Activated CD4-positive, alpha-beta memory T cell treated with anti-CD3 and anti-CD28 coated beads for 36 hours (primary cell): ENCODE measurements at regions of chr11 and their contacts with region 1.

Region 1: GRCh38 chr11:118791111-118791965 is at the start of gene DDX6:
- DNase-seq: peak; percentile 94
- H3K4me3 Mint-ChIP-seq: peak within 1 kb of the TSS; percentile 94
- H3K27ac Mint-ChIP-seq: peak within 1 kb of the TSS; percentile 99
- H3K4me1 Mint-ChIP-seq: peaks cover 22% of the 10 kb centered on the region
- H3K27me3 Mint-ChIP-seq: no peaks in the 10 kb centered on the region
- total RNA-seq, gene DDX6: 175 to 180 TPM

Region 2: DNA sequence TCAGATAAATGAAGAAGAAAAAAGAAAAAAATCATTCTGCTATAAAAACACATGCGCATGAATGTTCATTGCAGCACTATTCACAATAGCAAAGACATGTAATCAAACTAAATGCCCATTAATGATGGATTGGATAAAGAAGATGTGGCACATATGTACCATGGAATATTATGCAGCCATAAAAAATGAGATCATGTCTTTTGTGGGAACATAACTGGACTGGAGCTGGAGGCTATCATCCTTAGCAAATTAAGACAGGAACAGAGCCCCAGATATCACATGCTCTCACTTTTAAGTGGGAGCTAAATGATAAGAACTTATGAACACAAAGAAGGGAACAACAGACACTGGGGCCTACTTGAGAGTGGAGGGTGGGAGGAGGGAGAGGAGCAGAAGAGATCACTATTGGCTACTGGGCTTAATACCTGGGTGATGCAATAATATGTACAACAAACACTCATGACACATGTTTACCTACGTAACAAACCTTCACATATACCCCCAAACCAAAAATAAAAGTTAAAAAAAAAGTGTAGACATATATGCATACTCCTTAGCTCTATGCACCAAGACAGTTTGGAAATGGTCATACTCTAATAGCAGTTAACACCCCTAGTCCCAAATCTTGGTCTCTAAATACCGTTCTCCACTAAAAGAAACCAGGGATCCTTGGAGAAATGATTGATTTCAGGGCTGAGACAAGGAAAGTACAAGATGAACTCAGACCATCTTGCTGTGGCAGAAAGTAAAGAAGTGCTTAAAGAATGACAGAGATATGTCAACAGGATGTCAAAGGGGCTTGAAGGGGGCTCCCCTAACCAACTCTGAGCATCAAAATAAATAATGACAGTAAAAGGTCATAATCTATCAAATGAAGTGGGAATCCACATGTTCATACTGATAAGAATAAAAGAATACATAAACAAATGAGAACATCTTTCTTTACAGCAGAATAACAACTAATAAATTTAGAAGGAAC is 16.8 kb after region 1 on chr11:
- CTCF ChIA-PET with region 1: interaction called, 6 read pairs
- POLR2A ChIA-PET with region 1: interaction called, 10 read pairs
- intact Hi-C with region 1: no loop called
- DNase-seq: no peak
- H3K4me3 Mint-ChIP-seq: no peak overlapping the region
- H3K27ac Mint-ChIP-seq: no peak overlapping the region
- H3K4me1 Mint-ChIP-seq: peaks cover 4% of the 10 kb centered on the region
- H3K27me3 Mint-ChIP-seq: no peaks in the 10 kb centered on the region

Region 3: DNA sequence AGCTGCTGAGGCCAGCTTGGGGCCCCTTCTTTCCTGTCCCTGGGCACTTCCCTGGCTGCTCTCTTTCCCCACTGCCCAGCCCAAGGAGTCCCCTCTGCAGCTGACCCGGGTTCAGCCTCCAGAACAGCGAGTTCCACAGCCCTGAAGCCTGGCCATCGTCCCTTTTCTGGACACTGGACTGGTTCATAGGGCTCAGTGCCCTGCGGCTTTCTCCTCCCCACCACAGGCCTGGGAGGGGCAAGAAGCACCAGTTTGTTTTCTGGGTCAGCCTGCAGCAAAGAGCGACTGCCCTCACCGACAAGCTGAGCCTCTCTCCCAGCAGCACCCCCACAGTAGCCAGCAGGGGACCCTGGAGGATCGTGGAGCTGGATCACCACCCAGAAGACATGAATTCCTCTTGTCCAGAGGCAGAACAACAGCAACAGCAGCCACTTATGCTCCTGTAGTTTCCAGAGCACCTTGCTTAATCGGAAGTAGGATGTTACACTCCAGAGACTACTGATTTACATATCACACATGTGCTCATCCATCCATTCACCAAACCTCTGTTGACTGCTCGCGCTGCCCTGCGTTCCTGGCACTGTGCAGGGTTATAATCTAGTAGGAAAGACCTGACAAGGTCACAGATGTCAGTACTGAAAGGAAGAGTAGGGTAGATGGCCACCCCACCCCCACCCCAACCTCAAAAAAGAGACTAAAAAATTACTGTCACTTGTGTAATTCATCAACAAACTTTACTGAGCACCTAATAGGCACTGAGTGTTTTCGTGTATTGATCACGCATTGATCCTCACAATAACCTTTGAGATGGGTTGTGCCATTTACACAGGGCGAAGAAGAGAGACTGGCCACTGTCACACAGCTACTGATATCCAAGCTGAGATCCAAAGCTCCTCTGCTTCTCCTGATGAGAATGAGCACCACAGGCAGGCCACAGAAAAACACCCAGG is 79.3 kb after region 1 on chr11:
- CTCF ChIA-PET with region 1: interaction called, 51 read pairs
- POLR2A ChIA-PET with region 1: interaction called, 87 read pairs
- intact Hi-C with region 1: loop called (anchors 1 kb)
- DNase-seq: peak; percentile 73
- H3K4me3 Mint-ChIP-seq: peak overlapping the region; percentile 83
- H3K27ac Mint-ChIP-seq: peak overlapping the region; percentile 99
- H3K4me1 Mint-ChIP-seq: peaks cover 56% of the 10 kb centered on the region
- H3K27me3 Mint-ChIP-seq: no peaks in the 10 kb centered on the region

Region 4: DNA sequence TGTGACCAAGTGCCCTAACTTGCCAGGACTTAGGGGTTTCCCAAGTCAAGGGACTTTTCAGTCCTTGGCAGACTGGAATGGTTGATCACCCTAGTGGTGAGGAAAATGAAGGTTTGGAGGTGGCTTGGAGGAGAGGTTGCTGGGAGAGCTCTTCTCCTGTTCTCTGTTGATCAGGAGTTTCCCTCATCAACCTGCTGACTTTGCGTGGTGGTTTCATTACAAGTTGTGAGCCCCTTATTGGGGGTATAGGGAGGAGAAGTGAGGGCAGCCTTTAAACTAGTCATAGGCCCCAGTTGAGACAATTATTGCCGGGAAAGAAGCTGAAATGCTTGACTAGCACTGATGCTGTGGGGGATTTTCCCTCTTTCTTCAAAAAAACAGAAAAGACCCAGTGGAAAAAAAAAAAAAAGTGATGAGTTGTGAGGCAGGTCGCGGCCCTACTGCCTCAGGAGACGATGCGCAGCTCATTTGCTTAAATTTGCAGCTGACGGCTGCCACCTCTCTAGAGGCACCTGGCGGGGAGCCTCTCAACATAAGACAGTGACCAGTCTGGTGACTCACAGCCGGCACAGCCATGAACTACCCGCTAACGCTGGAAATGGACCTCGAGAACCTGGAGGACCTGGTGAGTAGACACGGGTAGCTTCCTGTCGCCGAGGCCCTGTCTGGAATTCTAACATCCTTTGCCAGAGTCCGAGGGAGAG is 92.2 kb after region 1 on chr11 and contains the start of gene CXCR5:
- CTCF ChIA-PET with region 1: interaction called, 12 read pairs
- POLR2A ChIA-PET with region 1: interaction called, 48 read pairs
- intact Hi-C with region 1: loop called (anchors 1 kb)
- DNase-seq: peak; percentile 84
- H3K4me3 Mint-ChIP-seq: peak within 1 kb of the TSS; percentile 85
- H3K27ac Mint-ChIP-seq: peak within 1 kb of the TSS; percentile 99
- H3K4me1 Mint-ChIP-seq: peaks cover 81% of the 10 kb centered on the region
- H3K27me3 Mint-ChIP-seq: no peaks in the 10 kb centered on the region
- total RNA-seq, gene CXCR5: 28.0 to 28.3 TPM

Region 5: DNA sequence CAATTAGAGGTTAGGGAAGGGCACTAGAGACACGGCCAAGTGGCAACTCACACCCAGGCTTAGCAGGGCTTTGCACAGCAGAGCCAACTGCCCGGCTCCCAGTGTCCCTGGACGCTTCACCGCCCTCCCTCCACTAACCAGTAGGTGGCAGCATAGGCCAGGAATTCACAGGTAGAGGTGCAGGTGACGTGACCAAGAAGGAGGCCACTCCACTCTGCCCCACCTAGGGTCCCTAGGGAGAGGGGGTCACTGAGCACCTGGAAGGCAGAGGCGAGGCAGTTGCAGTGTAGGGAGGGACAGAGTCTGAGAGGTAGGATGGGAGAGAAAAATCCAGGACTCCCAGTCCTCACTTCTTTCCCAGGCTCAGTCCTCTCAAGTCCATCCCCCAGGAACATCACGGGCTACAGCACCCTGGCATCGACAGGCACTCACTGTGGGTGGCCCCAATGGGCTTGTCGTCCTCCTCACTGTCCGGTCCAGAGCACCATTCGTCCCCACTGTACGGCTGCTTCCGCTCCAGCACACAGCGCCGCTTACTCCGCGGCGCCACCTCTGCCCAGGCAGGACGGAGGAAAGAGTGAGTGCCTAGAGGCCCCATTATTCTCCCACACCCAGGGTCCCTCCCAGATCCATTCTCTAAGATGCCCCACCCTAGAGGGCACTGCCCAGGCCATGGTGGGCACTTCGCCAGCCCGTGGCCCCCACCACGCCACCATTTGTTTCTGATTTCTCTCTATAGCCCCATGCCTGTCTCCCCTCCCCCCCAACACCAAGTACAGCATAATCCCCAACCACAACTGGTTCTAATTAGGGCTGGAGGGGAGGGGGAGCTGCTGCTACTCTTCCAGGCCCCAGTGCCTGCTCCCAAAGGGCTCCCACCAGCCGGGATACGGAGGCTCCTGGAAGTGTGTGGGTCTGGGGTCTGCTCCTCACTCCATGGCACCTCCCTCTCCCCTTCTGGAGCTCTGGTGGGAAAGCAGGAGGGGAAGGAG is 116.0 kb after region 1 on chr11:
- CTCF ChIA-PET with region 1: interaction called, 5 read pairs
- POLR2A ChIA-PET with region 1: interaction called, 43 read pairs
- intact Hi-C with region 1: no loop called
- DNase-seq: peak; percentile 93
- H3K4me3 Mint-ChIP-seq: no peak overlapping the region
- H3K27ac Mint-ChIP-seq: peak overlapping the region; percentile 65
- H3K4me1 Mint-ChIP-seq: peaks cover 44% of the 10 kb centered on the region
- H3K27me3 Mint-ChIP-seq: no peaks in the 10 kb centered on the region

Region 6: GRCh38 chr11:119018074-119018938 is 227.0 kb after region 1 on chr11 and contains the starts of genes RPS25 and TRAPPC4:
- CTCF ChIA-PET with region 1: no interaction called
- POLR2A ChIA-PET with region 1: no interaction called
- intact Hi-C with region 1: loop called (anchors 5 kb)
- DNase-seq: peak; percentile 98
- H3K4me3 Mint-ChIP-seq: peak within 1 kb of the TSS; percentile 99
- H3K27ac Mint-ChIP-seq: peak within 1 kb of the TSS; percentile 99
- H3K4me1 Mint-ChIP-seq: peaks cover 54% of the 10 kb centered on the region
- H3K27me3 Mint-ChIP-seq: no peaks in the 10 kb centered on the region
- total RNA-seq, gene RPS25: 1,852 to 1,922 TPM
- total RNA-seq, gene TRAPPC4: 86.4 to 87.8 TPM